Right cardiac atrium (tissue), 5 donors: ENCODE measurements at regions of chr2 and their contacts with region 1.

Region 1: DNA sequence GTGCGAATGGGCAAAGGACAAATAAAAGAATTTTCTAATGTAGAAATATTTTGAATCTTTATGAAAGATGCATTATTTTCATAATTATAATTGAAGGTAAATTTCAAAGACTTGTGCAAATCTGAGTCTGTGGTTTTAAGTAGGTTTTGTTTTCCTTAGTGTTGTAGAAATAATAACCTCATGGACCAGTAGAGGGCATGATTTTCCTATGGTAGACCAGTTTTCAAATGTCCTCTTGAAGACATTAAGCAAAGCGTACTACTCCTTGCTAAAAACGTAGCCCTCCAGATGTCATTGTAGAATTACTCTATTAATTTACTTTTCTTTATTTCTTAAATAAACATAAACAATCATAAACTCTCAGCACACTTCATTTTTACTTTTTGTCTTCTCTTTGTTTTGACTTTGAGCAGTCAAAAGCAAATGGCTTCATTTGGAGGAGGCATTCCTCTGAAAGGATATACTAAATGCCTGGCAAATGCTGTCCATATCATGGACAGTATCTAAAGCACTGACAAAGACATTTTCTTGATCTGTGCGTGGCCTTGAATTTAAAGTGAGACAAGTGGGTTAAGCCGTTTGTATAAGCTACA is 85.8 kb upstream of the FAM237A start:
- DNase-seq: no peak
- ATAC-seq: no peak
- H3K4me3 ChIP-seq: no peak overlapping the region
- H3K27ac ChIP-seq: no peak overlapping the region
- H3K4me1 ChIP-seq: no peaks in the 10 kb centered on the region
- H3K27me3 ChIP-seq: no peaks in the 10 kb centered on the region

Region 2: GRCh38 chr2:205957452-205958154 is 598.9 kb before region 1 on chr2:
- intact Hi-C with region 1: no loop called
- DNase-seq: no peak
- ATAC-seq: peak in 1 of 2 donors; percentile 14
- H3K4me3 ChIP-seq: no peak overlapping the region
- H3K27ac ChIP-seq: no peak overlapping the region
- H3K4me1 ChIP-seq: no peaks in the 10 kb centered on the region
- H3K27me3 ChIP-seq: no peaks in the 10 kb centered on the region

Region 3: DNA sequence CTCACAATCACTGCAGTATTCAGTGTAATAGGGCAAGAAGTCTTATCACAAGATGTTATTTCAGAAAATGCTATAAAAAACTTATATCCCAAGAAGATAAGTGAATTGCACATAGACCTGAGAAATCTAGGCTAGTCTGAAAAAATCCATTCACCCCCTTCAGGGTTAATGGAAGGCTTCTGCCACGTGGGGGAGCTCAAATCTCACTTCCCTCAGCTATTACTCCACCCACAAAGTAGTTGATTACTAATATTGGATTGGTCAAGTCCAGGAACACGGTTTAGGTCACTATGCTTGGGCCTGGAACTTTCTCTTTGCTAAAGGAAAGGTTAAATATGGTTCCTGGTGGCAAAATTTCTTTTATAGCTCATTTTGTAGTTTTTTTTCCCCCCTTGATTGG is 164.3 kb before region 1 on chr2:
- intact Hi-C with region 1: loop called in 2 of 4 experiments (anchors 10 kb)
- DNase-seq: no peak
- ATAC-seq: no peak
- H3K4me3 ChIP-seq: no peak overlapping the region
- H3K27ac ChIP-seq: no peak overlapping the region
- H3K4me1 ChIP-seq: peaks cover 1% of the 10 kb centered on the region
- H3K27me3 ChIP-seq: no peaks in the 10 kb centered on the region

Region 4: GRCh38 chr2:206423149-206423548 is 133.3 kb before region 1 on chr2:
- intact Hi-C with region 1: no loop called
- DNase-seq: no peak
- ATAC-seq: no peak
- H3K4me3 ChIP-seq: no peak overlapping the region
- H3K27ac ChIP-seq: no peak overlapping the region
- H3K4me1 ChIP-seq: no peaks in the 10 kb centered on the region
- H3K27me3 ChIP-seq: no peaks in the 10 kb centered on the region

Region 5: DNA sequence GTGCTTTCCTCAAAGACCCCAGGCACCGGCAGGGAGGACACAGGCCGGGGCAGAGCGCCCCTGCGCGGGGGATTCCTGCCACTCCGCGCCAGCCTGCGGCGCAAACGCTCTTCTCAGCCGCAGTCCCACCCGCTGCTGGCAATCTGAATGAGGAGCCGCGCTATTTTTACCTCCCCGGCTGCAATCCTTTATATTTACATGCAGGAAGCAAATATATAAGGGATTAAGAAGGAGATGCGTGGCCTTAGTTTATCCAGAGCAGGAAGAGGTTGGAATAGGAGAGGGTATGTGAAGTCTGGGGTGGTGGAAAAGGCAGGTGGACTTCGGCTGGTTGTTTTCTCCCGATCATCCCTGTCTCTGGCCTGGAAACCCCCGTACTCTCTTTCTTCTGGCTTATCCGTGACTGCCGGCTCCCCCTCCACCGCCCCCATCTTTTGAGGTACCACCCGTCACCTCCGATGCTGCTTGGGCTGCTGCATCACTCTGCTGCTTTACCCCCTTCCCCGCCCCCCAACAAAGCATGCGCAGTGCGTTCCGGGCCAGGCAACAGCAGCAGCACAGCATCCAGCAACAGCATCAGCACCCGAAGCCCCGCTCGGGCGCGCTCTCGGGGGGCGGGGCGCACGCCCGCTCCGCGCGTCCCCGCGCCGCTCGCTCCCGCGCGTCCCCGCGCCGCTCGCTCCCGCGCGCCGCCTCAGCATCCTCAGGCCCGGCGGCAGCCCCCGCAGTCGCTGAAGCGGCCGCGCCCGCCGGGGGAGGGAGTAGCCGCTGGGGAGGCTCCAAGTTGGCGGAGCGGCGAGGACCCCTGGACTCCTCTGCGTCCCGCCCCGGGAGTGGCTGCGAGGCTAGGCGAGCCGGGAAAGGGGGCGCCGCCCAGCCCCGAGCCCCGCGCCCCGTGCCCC is 113.4 kb before region 1 on chr2 and contains the start of gene ADAM23:
- intact Hi-C with region 1: loop called in 1 of 4 experiments (anchors 10 kb)
- DNase-seq: peak; percentile 58 to 82 (median 79)
- ATAC-seq: peak; percentile 83 to 85
- H3K4me3 ChIP-seq: peak within 1 kb of the TSS; percentile 76
- H3K27ac ChIP-seq: peak within 1 kb of the TSS; percentile 19
- H3K4me1 ChIP-seq: no peaks in the 10 kb centered on the region
- H3K27me3 ChIP-seq: peaks cover 4% of the 10 kb centered on the region
- total RNA-seq, gene ADAM23: 34.9 to 56.0 (median 42.2) TPM

Region 6: DNA sequence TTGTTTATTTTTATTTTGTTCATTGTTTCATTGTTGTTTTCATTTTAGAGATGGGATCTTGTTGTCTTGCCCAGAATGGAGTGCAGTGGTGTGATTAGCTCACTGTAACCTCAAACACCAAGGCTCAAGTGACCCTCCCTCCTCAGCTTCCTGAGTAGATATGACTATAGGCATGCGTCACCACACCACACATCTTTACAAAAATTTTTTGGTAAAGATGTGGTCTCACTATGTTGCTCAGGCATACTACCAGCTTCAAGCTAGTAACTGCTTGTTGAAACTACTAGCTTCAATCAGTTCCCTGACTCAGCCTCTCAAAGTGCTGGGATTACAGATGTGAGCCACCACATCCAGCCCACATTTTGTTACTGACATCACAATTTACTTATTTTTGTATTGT is 100.6 kb after region 1 on chr2:
- intact Hi-C with region 1: no loop called
- DNase-seq: no peak
- ATAC-seq: no peak
- H3K4me3 ChIP-seq: no peak overlapping the region
- H3K27ac ChIP-seq: no peak overlapping the region
- H3K4me1 ChIP-seq: no peaks in the 10 kb centered on the region
- H3K27me3 ChIP-seq: no peaks in the 10 kb centered on the region